Activated T-helper 1 cell treated with anti-CD3 and anti-CD28 coated beads, Interleukin-12 subunit alpha, Interleukin-12 subunit beta, Interleukin-2, Interleukin-4 antibody, amounts not matched to agents 30 ng/mL and 10 ng/mL and 1 ng/mL, durations not matched to agents 14 hours and 24 hours and 36 hours (primary cell): ENCODE measurements at regions of chr1 and their contacts with region 1.

Region 1: DNA sequence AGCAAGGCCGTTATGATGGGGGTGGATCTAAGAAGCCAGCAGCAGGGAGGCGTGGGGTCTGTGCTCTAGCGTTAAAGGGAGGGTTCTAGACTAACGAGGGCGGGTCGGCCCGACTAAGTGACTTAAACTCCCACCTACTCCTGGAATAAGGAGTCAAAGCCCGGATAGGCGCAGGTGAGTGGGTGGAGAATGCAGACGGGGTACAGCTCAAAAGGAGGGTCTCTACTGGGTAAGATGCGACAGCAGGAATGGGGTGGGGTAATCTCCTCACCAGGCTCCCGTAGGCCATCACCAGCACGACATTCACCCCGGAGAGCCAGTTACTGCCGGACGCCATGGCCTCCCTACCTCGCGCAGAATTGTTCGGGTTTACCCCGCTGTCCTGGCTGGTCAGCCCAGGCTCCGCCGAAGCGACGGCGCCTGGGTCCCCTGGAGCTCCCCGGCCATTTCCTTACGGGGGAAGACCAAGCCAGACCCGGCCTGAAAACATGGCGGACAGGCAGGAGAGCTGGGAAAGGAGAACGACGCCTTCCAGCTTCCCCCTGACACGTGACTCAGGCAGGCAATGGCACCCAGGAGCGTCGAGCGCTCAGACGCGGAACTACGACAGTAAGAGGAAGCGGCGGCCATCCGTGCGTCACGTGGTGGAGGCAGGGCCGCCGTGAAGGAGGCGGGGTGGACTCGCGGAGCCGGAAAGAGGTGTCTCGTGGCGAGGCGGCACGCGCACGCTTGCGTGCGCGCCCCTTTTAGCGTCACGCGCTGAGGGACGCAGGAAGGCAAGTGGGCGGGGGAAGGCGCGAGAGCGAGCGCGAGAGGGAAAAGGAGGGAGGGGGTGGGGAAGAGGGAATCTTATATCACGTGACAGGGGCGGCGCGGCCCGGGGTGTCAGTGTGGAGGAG is at the start of gene UBAP2L:
- DNase-seq: peak; percentile 99
- H3K4me3 Mint-ChIP-seq: peak within 1 kb of the TSS; percentile 97
- H3K27ac Mint-ChIP-seq: peak within 1 kb of the TSS; percentile 99
- H3K4me1 Mint-ChIP-seq: peaks cover 62% of the 10 kb centered on the region
- H3K27me3 Mint-ChIP-seq: no peaks in the 10 kb centered on the region
- total RNA-seq, gene UBAP2L: 258 and 284 TPM in 2 replicates

Region 2: GRCh38 chr1:153727463-153728304 is 492.6 kb before region 1 on chr1 and contains the start of gene INTS3:
- intact Hi-C with region 1: loop called (anchors 10 kb)
- DNase-seq: peak; percentile 99
- H3K4me3 Mint-ChIP-seq: peak within 1 kb of the TSS; percentile 90
- H3K27ac Mint-ChIP-seq: peak within 1 kb of the TSS; percentile 91
- H3K4me1 Mint-ChIP-seq: peaks cover 35% of the 10 kb centered on the region
- H3K27me3 Mint-ChIP-seq: no peaks in the 10 kb centered on the region
- total RNA-seq, gene INTS3: 57.0 and 57.3 TPM in 2 replicates

Region 3: GRCh38 chr1:154145986-154146385 is 74.3 kb before region 1 on chr1:
- intact Hi-C with region 1: no loop called
- DNase-seq: no peak
- H3K4me3 Mint-ChIP-seq: no peak overlapping the region
- H3K27ac Mint-ChIP-seq: no peak overlapping the region
- H3K4me1 Mint-ChIP-seq: peaks cover 10% of the 10 kb centered on the region
- H3K27me3 Mint-ChIP-seq: no peaks in the 10 kb centered on the region

Region 4: DNA sequence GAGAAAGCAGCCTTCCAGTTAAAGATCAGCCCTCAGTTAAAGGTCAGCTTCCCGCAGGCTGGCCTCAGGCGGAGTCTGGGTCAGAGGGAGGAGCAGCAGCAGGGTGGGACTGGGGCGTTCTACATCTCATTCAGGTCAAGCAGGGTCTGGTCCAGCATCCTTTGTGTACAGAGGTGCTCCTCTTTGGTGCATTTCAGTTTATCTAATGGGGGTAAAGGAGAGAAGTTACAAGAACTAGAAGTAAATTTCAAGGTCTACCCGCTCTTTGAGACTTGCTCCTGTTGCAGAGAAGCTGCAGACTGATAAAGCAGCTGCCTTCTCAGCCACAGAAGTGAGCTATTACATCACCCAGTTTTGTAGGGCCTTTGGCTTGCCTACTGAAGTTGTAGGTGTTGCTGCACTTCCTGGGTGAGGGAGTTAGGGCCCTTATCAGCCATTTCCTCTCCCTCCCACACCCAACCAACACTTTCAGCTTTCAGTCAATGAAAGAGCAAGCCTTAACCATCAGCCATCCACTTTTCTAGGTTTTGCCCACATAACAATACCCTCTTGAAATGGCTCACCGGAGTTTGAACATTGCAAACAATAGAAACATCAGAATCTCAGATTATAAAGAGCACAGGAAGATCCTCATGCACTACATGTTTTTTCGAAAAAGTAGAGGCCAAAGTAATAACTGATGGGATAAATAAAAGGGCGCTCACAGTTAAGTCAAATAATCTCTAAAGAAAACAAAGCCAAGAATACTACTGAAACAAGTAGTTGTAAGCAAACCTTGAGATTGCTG is 62.6 kb before region 1 on chr1:
- intact Hi-C with region 1: loop called (anchors 1 kb)
- DNase-seq: peak; percentile 79
- H3K4me3 Mint-ChIP-seq: peak overlapping the region; percentile 62
- H3K27ac Mint-ChIP-seq: peak overlapping the region; percentile 70
- H3K4me1 Mint-ChIP-seq: peaks cover 65% of the 10 kb centered on the region
- H3K27me3 Mint-ChIP-seq: no peaks in the 10 kb centered on the region

Region 5: GRCh38 chr1:154241703-154242351 is 21.5 kb after region 1 on chr1:
- intact Hi-C with region 1: no loop called
- DNase-seq: no peak
- H3K4me3 Mint-ChIP-seq: no peak overlapping the region
- H3K27ac Mint-ChIP-seq: peak overlapping the region; percentile 35
- H3K4me1 Mint-ChIP-seq: peaks cover 33% of the 10 kb centered on the region
- H3K27me3 Mint-ChIP-seq: no peaks in the 10 kb centered on the region

Region 6: GRCh38 chr1:154272217-154272998 is 52.1 kb after region 1 on chr1 and contains the start of gene HAX1:
- intact Hi-C with region 1: loop called (anchors 2 kb)
- DNase-seq: peak; percentile 94
- H3K4me3 Mint-ChIP-seq: peak within 1 kb of the TSS; percentile 98
- H3K27ac Mint-ChIP-seq: peak within 1 kb of the TSS; percentile 97
- H3K4me1 Mint-ChIP-seq: peaks cover 46% of the 10 kb centered on the region
- H3K27me3 Mint-ChIP-seq: no peaks in the 10 kb centered on the region
- total RNA-seq, gene HAX1: 122 and 123 TPM in 2 replicates

Region 7: GRCh38 chr1:154295408-154296235 is 75.3 kb after region 1 on chr1:
- intact Hi-C with region 1: no loop called
- DNase-seq: no peak
- H3K4me3 Mint-ChIP-seq: no peak overlapping the region
- H3K27ac Mint-ChIP-seq: no peak overlapping the region
- H3K4me1 Mint-ChIP-seq: no peaks in the 10 kb centered on the region
- H3K27me3 Mint-ChIP-seq: peaks cover 4% of the 10 kb centered on the region

Region 8: DNA sequence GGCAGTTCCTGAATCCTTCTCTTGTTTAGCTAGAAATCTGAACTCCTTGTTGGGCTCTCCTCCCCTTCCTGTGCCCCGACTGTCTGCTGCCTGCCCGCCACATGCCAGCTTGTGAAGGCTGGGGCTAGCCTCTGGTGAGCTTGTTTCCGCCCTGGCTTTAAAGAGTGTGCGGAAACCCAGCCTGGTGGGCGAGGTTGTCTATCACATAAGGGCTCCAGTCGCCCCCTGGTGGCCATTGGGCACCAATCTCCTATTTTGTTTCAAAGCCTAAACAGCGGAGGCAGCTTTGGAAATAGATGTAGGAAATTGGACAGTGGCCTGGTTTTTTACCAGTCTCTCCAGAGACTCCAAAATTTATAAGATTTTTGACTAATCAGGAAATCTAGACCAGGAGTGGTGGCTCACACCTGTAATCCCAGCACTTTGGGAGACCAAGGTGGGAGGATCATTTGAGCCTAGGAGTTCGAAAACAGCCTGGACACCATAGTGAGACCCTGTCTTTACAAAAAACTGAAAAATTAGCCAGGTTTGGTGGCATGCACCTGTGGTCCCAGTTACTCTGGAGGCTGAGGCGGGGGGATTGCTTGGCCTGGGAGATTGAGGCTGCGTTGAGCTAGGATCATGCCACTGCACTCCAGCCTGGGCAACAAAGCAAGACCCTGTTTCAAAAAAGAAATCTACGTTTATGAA is 114.8 kb after region 1 on chr1:
- intact Hi-C with region 1: loop called (anchors 1 kb)
- DNase-seq: peak; percentile 78
- H3K4me3 Mint-ChIP-seq: no peak overlapping the region
- H3K27ac Mint-ChIP-seq: peak overlapping the region; percentile 75
- H3K4me1 Mint-ChIP-seq: peaks cover 65% of the 10 kb centered on the region
- H3K27me3 Mint-ChIP-seq: no peaks in the 10 kb centered on the region

Region 9: GRCh38 chr1:154524881-154525280 is 304.6 kb after region 1 on chr1:
- intact Hi-C with region 1: no loop called
- DNase-seq: no peak
- H3K4me3 Mint-ChIP-seq: no peak overlapping the region
- H3K27ac Mint-ChIP-seq: no peak overlapping the region
- H3K4me1 Mint-ChIP-seq: no peaks in the 10 kb centered on the region
- H3K27me3 Mint-ChIP-seq: peaks cover 38% of the 10 kb centered on the region

Region 10: DNA sequence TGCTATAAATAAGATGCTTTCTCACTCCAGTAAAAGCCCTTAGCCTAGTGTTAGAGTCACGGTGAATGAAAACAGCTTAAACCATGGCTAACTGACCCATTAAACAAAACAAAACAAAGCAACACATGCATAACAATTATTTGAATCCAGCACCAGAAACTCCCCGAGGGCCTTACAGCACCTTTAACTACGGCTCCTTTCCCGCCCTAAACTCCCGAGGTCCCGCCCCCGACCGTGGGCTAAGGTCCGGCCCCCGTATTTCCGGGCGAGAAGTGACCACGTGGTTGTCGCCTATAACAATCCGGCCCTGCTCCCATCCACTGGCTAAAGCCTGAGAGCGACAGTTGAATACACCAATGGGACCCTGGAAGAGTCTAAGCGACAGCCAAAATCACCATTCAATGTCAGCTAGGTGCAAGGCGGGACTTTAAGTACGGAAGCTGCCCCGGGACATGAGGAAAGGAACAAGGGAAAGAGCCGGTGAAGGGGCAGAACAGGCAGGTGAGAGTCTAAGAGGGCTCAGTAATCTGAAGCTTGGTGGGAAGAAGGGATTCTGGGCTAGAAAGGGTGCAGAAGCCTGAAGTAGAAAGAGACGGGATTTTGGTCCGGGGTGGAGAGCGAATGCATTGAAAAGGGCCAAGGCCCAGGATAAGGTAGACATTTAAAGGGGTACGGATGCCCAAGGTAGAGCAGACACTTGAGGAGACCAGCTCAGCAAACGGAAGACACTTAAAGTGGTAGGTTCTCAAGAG is 762.8 kb after region 1 on chr1 and contains the start of gene FLAD1:
- intact Hi-C with region 1: loop called (anchors 1 kb)
- DNase-seq: peak; percentile 96
- H3K4me3 Mint-ChIP-seq: no peak within 1 kb of the TSS
- H3K27ac Mint-ChIP-seq: peak within 1 kb of the TSS; percentile 42
- H3K4me1 Mint-ChIP-seq: peaks cover 8% of the 10 kb centered on the region
- H3K27me3 Mint-ChIP-seq: no peaks in the 10 kb centered on the region
- total RNA-seq, gene FLAD1: 69.2 and 74.3 TPM in 2 replicates